PC-9 (cell line): ENCODE measurements at regions of chrX and their contacts with region 1.

Region 1: DNA sequence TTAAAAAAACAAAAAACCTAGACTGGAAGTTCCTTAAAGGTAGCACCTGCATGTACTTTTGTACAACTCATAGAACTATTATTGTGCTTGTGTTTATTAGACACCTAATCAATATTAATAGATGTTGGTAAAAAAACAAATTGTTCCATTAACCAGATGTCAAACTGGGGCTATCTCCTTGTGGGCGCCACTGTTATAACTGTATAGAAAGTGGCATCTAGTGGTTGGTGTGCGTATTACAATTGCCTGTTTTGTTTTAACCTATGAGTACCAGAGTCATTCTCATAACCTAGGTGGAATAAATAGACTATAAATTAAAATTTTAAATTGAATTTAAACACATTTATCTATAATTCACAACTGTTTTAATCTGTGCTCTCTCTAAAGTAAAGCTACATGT is 97.4 kb downstream of the COL4A5 start:
- DNase-seq: peak; percentile 8 to 55
- H3K4me3 ChIP-seq: no peak overlapping the region
- H3K27ac ChIP-seq: no peak overlapping the region
- H3K4me1 ChIP-seq: no peaks in the 10 kb centered on the region
- H3K27me3 ChIP-seq: no peaks in the 10 kb centered on the region
- CTCF ChIP-seq: peak; percentile 92

Region 2: GRCh38 chrX:108091266-108091877 is 445.6 kb before region 1 on chrX and contains the starts of genes ATG4A and PSMD10:
- CTCF ChIA-PET with region 1: no interaction called
- POLR2A ChIA-PET with region 1: no interaction called
- intact Hi-C with region 1: loop called (anchors 2 kb)
- DNase-seq: peak; percentile 97
- H3K4me3 ChIP-seq: peak within 1 kb of the TSS; percentile 84
- H3K27ac ChIP-seq: peak within 1 kb of the TSS; percentile 80
- H3K4me1 ChIP-seq: peaks cover 23% of the 10 kb centered on the region
- H3K27me3 ChIP-seq: no peaks in the 10 kb centered on the region
- CTCF ChIP-seq: no peak; the same call in 1 of the 2 replicates
- total RNA-seq, gene ATG4A: 5.8 and 9.6 TPM in 2 replicates
- total RNA-seq, gene PSMD10: 106 and 127 TPM in 2 replicates

Region 3: GRCh38 chrX:108165383-108166111 is 371.5 kb before region 1 on chrX:
- CTCF ChIA-PET with region 1: interaction called, 3 read pairs
- POLR2A ChIA-PET with region 1: no interaction called
- intact Hi-C with region 1: loop called (anchors 1 kb)
- DNase-seq: peak in 1 of 2 experiments; percentile 26
- H3K4me3 ChIP-seq: no peak overlapping the region
- H3K27ac ChIP-seq: no peak overlapping the region
- H3K4me1 ChIP-seq: peaks cover 9% of the 10 kb centered on the region
- H3K27me3 ChIP-seq: no peaks in the 10 kb centered on the region
- CTCF ChIP-seq: peak; percentile 49; the same call in 1 of the 2 replicates

Region 4: DNA sequence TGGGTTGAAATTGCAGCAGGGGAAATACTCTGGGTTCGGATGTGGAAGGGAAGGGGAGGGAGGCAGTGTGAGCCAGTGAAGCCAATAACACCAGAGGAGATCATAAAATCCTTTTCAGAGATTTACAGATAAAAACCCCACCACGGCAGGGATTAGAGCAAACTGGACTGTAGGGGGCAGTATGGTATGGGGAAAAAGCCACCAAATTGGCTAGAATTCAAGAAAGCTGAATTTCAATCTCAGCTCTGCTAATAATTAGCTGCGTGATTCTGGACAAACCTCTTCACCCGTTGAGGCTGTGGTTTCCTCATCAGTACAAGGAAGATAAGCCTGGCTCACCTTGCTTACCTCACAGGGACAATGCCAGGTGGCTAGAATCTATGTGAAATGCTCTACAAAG is 337.3 kb before region 1 on chrX:
- CTCF ChIA-PET with region 1: interaction called, 4 read pairs
- POLR2A ChIA-PET with region 1: no interaction called
- intact Hi-C with region 1: loop called (anchors 1 kb)
- DNase-seq: peak; percentile 43 to 44
- H3K4me3 ChIP-seq: no peak overlapping the region
- H3K27ac ChIP-seq: no peak overlapping the region
- H3K4me1 ChIP-seq: no peaks in the 10 kb centered on the region
- H3K27me3 ChIP-seq: no peaks in the 10 kb centered on the region
- CTCF ChIP-seq: peak; percentile 77

Region 5: GRCh38 chrX:108224727-108225621 is 312.0 kb before region 1 on chrX:
- CTCF ChIA-PET with region 1: interaction called, 4 read pairs
- POLR2A ChIA-PET with region 1: no interaction called
- intact Hi-C with region 1: loop called (anchors 1 kb)
- DNase-seq: peak in 1 of 2 experiments; percentile 7
- H3K4me3 ChIP-seq: no peak overlapping the region
- H3K27ac ChIP-seq: no peak overlapping the region
- H3K4me1 ChIP-seq: no peaks in the 10 kb centered on the region
- H3K27me3 ChIP-seq: no peaks in the 10 kb centered on the region
- CTCF ChIP-seq: peak; percentile 85

Region 6: DNA sequence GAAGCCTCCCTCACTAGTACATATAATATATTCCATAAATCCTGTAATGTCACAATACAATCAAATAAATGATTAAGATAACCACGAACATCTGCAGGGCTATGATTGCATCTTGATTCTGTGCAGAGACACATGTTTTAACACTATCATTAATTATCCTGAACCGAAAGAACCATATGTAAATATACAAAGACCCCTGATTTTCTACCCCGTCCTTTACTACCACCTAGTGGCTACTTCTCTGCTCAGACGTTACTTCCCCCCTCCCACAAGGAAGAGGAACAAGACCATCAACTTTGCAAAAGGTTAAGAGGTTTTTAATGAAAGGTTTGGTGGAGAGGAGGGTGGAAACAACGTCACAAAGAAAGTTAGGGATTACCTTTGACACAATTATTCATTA is 232.8 kb before region 1 on chrX:
- CTCF ChIA-PET with region 1: no interaction called
- POLR2A ChIA-PET with region 1: no interaction called
- intact Hi-C with region 1: loop called (anchors 10 kb)
- DNase-seq: no peak
- H3K4me3 ChIP-seq: no peak overlapping the region
- H3K27ac ChIP-seq: no peak overlapping the region
- H3K4me1 ChIP-seq: no peaks in the 10 kb centered on the region
- H3K27me3 ChIP-seq: no peaks in the 10 kb centered on the region
- CTCF ChIP-seq: peak; percentile 58